Posterior vena cava (tissue), 2 donors: ENCODE measurements at regions of chr12 and their contacts with region 1.

Region 1: DNA sequence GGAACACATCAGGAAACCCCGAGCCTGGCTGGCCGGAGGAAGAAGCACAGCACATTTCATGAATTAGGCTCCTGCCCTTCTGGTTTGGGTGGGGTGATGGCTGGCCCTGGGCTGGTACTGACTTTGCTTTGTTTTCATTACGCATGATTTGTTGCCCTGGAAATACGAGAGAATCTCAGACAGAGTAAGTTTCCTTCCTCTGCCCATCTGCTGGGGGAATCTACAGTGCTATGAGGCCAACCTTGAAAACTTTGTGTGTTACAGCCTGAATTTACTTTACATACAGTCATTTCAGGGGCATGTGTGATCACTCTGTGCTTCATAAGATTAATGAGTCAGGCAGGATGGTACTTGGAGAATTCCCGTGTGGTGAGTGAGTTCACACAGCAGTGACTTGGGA is 20.5 kb upstream of the SLC5A8 start:
- DNase-seq: no peak

Region 2: DNA sequence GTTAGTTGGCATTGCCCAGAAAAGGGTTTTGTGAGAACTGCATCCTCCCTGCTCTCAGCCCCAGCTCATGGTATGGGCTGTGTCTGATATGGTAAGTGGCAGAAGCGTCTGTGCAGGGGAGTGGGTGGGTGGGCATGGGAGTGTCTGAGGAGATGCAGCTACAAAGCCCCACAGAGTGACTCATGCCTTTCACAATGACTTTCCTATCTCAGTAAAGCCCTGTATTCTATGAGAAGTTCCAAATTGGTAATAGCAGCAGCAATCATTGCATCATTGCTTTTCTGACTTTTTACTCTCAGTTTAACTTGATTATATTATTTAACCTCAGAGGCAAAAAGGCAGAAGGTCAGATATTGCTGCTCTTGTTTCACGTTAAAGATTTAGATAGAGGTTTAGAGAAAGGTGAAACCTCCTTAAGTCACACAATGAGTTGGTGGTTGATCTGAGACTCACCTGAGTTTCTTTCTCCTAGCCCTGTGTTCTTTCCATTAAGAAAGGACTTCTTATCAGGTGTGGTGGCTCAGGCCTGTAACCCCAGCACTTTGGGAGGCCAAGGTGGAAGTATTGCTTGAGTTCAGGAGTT is 192.2 kb before region 1 on chr12:
- intact Hi-C with region 1: no loop called
- DNase-seq: no peak

Region 3: DNA sequence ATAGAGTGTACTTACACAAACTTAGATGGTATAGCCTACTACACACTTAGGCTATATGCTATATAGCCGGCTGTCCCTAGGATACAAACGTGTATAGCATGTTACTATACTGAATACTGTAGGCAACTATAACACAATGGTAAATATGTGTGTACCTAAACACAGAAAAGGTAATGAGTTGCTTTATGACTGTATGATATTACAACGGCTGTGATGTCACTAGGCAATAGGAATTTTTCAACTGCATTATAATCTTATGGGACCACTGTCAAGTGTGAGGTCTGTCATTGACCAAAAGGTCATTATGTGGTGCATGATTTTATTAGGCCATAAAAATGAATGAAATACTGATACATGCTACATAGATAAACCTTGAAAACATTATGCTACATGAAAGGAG is 94.6 kb before region 1 on chr12:
- intact Hi-C with region 1: no loop called
- DNase-seq: no peak

Region 4: GRCh38 chr12:101256266-101256665 is 25.7 kb after region 1 on chr12:
- intact Hi-C with region 1: loop called in 1 of 2 experiments (anchors 1 kb)
- DNase-seq: no peak